ENCODE measurements at regions of chr19 and their contacts with region 1.

Region 1: DNA sequence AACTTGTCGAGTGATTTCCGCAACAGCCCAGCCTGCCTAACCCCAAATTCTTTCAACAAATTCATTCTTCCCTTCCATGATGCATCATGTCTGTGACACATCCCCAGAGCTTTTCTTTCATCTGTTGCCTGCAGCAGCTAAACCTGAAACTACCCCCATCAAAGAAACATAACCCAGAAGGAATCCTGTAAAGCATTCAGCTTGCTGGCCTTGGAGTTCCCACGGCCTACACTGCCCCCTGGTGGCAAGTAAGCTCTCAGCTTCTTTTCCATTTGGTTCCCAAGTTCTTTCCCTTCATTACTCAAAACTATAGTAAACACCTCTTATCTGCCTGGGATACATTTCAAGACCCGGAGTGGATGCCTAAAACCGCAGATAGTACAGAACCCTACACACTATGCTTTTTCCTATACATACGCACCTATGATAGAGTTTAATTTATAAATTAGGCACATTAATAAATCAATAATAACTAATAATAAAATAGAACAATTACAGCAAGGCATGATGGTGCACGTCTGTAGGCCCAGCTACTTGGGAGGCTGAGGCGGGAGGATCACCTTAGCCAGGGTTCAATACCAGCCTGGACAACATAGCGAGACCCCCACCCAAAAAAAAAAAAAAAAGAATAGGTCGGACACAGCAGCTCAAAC is 7.4 kb downstream of the ETHE1 start:
- DNase-seq: peak; percentile 80
- H3K4me3 Mint-ChIP-seq: no peak overlapping the region
- H3K27ac Mint-ChIP-seq: no peak overlapping the region
- H3K4me1 Mint-ChIP-seq: peaks cover 19% of the 10 kb centered on the region
- H3K27me3 Mint-ChIP-seq: no peaks in the 10 kb centered on the region

Region 2: DNA sequence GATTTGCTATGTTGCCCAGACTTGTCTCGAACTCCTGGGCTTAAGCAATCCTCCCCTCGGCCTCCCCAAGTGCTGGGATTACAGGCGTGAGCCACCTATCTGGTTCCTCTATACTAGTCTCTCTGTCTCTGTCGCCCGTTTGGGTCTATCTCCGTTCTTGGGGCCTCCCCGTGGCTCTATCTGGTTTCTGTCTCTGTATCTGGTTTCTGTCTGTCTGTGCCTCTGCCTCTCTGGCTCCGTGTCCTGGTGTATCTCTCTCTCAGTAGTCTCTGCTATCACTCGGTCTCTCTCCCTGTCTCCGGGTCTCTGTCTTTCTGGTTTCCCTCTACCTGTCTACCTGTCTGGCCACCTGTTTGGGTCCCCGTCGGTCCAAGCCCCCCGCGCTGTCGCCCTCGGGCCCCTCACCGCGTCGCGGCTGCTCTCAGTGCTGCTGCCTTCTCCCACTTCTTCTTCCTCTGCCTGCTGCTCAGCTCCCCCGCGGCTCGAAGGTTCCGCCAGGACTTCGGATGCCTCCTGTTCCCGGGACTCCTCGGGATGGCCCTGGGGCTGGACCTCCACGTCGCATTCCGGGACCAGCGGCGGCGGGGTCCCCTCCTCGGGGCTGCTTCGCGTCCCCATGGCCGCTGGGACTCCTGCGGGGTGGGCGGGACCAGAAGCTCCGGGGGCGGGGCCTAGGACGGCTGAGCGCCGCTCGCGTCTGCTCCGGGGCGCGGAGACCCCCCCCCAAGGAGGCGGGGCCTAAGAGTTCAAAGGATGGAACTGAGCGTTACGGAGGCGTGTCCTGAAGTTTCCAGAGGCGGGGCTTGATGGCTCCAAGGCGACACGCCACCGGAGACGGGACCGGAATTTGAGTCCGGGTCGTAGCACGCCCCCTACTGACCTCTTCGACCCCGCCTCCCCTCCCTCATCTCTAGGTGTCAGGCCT is 15.8 kb before region 1 on chr19:
- CTCF ChIA-PET with region 1: interaction called, 41 read pairs
- POLR2A ChIA-PET with region 1: interaction called, 9 read pairs
- DNase-seq: peak; percentile 98
- H3K4me3 Mint-ChIP-seq: peak overlapping the region; percentile 96
- H3K27ac Mint-ChIP-seq: peak overlapping the region; percentile 97
- H3K4me1 Mint-ChIP-seq: peaks cover 32% of the 10 kb centered on the region
- H3K27me3 Mint-ChIP-seq: no peaks in the 10 kb centered on the region

Region 3: GRCh38 chr19:43532962-43533545 is 13.5 kb after region 1 on chr19 and contains the start of gene ZNF575:
- CTCF ChIA-PET with region 1: interaction called, 23 read pairs
- POLR2A ChIA-PET with region 1: interaction called, 8 read pairs
- DNase-seq: peak; percentile 89
- H3K4me3 Mint-ChIP-seq: peak within 1 kb of the TSS; percentile 86
- H3K27ac Mint-ChIP-seq: peak within 1 kb of the TSS; percentile 98
- H3K4me1 Mint-ChIP-seq: peaks cover 26% of the 10 kb centered on the region
- H3K27me3 Mint-ChIP-seq: no peaks in the 10 kb centered on the region
- total RNA-seq, gene ZNF575: 4.1 to 4.8 TPM

Measured in activated CD4-positive, alpha-beta memory T cell treated with anti-CD3 and anti-CD28 coated beads, Interleukin-2, amount 10 ng/mL, durations not matched to agents 7 days and 5 days (primary cell).